HAP-1 (cell line): ENCODE measurements at regions of chr2 and their contacts with region 1.

Region 1: DNA sequence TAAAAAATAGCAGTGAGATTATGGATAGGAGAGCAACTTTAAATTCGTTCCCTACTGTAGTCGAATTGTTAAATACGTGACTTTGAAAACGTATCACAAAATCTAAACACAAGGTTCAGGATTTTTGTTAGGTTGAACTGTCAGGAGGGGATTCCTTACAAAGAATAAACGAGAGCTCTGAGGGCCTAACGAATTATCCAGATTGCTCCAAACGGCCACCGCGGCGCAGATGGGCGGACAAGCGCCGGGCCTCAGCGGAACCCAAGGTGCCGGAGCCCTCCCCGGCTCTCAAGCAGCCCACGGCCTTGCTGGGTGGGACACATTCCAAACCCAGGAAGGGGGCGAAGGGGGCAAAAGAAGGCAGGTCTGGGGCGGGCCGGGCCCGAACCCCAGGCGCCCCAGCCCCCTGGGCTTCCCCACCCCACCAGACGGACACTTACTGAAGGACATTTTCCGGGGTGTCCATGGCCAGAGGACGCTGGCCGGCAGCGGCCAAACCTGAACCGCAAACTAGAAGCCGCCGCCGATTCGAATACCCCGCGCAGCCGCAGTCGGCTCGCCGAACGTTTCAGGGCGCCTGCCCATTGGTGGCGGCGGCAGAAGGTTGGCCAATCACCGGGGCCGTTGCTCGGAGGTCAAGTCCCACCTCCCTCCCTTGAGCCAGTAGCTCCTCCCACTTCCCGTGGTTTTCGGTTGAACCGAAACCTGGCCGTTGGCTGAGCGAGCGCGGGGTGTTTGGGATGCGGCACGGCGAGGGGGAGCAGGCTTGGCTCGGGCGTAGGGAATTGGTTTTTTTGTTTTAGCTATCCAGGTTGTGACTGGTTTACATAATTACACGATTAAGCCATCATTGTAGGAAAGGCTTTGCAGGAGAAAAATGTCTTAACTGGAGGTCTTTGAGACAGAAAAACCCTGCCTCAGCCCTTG is at the start of gene BUB1:
- DNase-seq: peak; percentile 95 to 98
- H3K4me3 ChIP-seq: peak within 1 kb of the TSS; percentile 89
- H3K4me1 ChIP-seq: peaks cover 19% of the 10 kb centered on the region
- H3K27me3 ChIP-seq: no peaks in the 10 kb centered on the region

Region 2: DNA sequence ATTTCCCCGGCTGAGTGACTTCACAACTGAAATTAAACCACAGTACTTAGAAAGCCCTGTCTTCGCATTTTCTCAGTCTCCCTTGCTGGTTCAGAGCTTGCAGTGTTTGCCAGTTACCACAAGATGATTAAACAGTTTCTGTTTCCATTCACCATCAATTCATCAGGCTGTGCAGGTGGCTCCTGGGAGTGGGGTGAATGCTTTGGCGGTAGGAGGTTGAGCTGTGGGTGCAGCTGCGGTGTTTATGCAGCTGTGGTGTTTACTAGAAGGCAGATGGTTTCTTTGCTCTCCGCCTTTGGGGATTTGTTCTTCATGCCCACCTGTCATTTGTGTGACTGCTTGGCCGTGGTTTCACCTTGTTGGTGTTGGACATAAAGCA is 70.7 kb after region 1 on chr2:
- in situ Hi-C with region 1: loop called (anchors 10 kb)
- DNase-seq: no peak
- H3K4me3 ChIP-seq: no peak overlapping the region
- H3K4me1 ChIP-seq: no peaks in the 10 kb centered on the region
- H3K27me3 ChIP-seq: 0 out of 2 replicates have a peak, but pooled peaks cover 2% of the 10 kb centered on the region